ENCODE measurements at regions of chr7 and their contacts with region 1.

Region 1: DNA sequence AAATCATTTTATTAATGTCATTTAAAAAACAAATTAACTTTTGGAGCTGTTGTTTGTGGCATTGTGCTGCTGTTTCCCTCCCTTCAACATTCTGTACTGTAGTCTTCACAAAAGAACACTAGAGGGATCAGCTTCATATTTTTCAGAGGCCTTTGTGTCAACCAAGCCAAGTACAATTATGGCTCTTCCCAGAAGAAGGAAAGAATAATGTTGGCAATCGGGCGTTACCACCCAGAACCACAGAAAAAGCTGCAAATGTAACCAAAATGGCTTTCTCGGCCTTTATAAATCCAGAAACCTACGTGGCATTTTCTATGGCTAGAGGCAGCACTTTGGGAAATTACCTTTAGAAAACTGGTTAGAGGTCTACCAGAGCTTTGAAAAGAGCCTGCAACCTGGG is 98.8 kb upstream of the COL1A2 start:
- DNase-seq: peak in 1 of 2 donors; percentile 13
- ATAC-seq: peak; percentile 66 to 87 (median 70)
- H3K4me3 ChIP-seq: peak overlapping the region in 5 of 10 donors; percentile 7 to 28 (median 21)
- H3K27ac ChIP-seq: peak overlapping the region in 7 of 10 donors; percentile 65 to 86 (median 74)
- H3K4me1 ChIP-seq: peaks cover 0 to 30% (median 9%) of the 10 kb centered on the region in 9 donors
- H3K27me3 ChIP-seq: peaks cover 0 to 10% (median 0%) of the 10 kb centered on the region in 7 donors
- CTCF ChIP-seq: peak in 8 of 9 donors; percentile 30 to 76 (median 55)

Region 2: DNA sequence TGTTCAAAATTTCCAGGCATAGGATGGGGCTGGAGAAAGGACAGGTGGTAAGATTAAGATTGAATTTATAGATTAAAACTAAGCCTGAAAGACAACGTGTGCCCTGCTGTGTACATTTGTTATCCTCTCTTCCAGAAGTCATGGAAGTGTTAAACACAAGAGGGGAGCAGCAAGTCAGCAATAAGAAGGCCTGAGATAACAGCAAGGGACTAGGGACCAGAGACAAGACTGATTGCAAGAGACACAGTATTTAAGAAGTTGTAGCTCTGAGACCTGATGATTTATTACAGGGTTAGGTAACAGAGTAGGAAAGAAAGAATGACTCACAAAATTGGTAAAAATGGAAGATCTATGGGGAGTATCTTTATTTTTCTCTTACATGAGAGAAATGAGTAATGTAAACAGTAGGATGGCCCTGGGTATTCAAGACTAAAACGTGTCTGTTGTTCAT is 43.1 kb after region 1 on chr7:
- intact Hi-C with region 1: no loop called
- DNase-seq: no peak
- ATAC-seq: no peak
- H3K4me3 ChIP-seq: no peak overlapping the region
- H3K27ac ChIP-seq: no peak overlapping the region
- H3K4me1 ChIP-seq: no peaks in the 10 kb centered on the region
- H3K27me3 ChIP-seq: no peaks in the 10 kb centered on the region
- CTCF ChIP-seq: no peak

Region 3: GRCh38 chr7:94374231-94374630 is 78.4 kb after region 1 on chr7:
- intact Hi-C with region 1: loop called in 4 of 10 experiments (anchors 1 to 5 kb)
- DNase-seq: peak; percentile 60 to 73
- ATAC-seq: peak; percentile 72 to 90 (median 84)
- H3K4me3 ChIP-seq: peak overlapping the region in 5 of 10 donors; percentile 18 to 37 (median 30)
- H3K27ac ChIP-seq: peak overlapping the region; percentile 23 to 89 (median 84)
- H3K4me1 ChIP-seq: peaks cover 0 to 28% (median 0%) of the 10 kb centered on the region in 9 donors
- H3K27me3 ChIP-seq: no peaks in the 10 kb centered on the region
- CTCF ChIP-seq: peak in 3 of 9 donors; percentile 16 to 24 (median 20)

Region 4: DNA sequence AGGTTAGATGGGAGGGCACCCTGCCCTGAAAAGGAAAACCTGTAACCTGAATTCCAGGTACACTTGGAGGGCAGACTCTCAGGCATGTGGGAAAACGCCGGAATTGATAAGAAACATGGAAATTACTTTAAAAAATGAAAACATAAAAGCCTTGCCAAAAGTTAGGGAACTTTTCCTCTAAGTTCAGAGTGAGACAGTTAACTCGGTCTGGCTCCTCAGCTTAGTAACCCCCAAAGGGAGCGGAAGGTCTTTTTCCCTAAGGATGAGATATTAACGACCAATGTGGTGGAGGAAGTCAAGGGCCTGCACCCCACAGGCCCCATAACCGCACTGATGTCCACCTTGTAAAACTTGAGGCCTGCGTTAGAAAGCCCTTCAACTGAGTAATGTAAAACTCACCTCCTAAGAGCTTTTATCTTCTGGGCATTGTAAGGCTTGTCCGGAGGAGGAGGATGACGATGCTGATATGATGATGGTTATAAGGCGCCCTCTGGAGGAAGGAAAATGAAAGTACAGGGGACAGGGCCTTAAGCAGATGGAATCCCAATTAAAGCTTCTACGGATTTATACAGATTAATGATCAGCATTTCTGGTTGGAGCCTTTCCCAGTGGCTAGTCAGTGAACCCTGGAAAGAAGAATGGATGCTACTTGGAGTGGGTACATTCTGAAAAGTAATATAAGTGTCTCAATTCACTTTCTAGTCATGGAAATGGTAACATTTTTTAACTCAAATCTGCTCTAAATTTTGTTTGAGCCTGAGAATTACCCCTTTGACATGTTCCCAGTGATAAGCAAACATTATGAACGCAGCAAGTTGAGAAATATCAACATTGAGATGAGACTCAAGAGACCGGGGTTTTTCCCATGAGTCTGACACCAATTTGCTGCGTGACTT is 99.5 kb after region 1 on chr7:
- intact Hi-C with region 1: loop called (anchors 1 to 10 kb)
- DNase-seq: peak in 1 of 2 donors; percentile 68
- ATAC-seq: peak; percentile 58 to 87 (median 78)
- H3K4me3 ChIP-seq: peak overlapping the region; percentile 33 to 71 (median 58)
- H3K27ac ChIP-seq: peak overlapping the region; percentile 77 to 91 (median 86)
- H3K4me1 ChIP-seq: peaks cover 0 to 44% (median 15%) of the 10 kb centered on the region in 9 donors
- H3K27me3 ChIP-seq: peaks cover 0 to 24% (median 6%) of the 10 kb centered on the region in 7 donors
- CTCF ChIP-seq: peak; percentile 48 to 85 (median 75)

Region 5: DNA sequence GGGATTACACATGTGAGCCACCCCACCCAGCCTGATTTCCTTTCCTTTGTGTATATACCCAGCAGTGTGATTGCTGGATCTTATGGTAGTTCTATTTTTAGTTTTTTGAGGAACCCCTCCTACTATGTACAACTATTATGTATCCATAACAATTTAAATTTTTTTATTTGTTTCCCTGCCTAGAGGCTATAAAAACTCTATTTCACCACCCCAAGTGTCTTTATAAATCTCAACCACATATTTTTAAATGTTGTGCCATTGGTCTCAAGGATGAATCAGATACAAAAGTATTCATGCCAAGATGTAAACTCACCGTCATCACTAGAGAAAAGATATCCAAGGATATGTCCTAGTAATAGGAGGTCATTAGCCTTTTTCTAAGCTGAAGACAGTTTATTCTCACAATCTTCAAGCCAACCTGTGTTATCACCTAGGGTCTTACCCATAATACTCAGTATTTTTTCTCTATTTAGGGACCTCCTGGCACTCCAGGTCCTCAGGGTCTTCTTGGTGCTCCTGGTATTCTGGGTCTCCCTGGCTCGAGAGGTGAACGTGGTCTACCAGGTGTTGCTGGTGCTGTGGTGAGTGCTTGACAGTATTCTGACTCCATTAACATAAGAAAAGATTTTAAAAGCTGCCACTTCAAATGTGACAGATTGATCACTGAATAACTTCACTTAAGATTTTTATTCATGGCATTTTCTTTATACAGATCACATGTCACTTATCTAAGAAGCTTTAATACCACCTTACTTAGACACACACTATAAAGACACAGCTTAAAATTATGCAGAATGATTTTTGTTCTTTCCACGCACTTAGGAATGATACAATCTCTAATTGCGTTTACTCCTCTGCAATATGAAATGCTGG is 128.2 kb after region 1 on chr7:
- intact Hi-C with region 1: loop called in 1 of 10 experiments (anchors 10 kb)
- DNase-seq: no peak
- ATAC-seq: no peak
- H3K4me3 ChIP-seq: no peak overlapping the region
- H3K27ac ChIP-seq: no peak overlapping the region
- H3K4me1 ChIP-seq: no peaks in the 10 kb centered on the region
- H3K27me3 ChIP-seq: no peaks in the 10 kb centered on the region
- CTCF ChIP-seq: no peak

Region 6: DNA sequence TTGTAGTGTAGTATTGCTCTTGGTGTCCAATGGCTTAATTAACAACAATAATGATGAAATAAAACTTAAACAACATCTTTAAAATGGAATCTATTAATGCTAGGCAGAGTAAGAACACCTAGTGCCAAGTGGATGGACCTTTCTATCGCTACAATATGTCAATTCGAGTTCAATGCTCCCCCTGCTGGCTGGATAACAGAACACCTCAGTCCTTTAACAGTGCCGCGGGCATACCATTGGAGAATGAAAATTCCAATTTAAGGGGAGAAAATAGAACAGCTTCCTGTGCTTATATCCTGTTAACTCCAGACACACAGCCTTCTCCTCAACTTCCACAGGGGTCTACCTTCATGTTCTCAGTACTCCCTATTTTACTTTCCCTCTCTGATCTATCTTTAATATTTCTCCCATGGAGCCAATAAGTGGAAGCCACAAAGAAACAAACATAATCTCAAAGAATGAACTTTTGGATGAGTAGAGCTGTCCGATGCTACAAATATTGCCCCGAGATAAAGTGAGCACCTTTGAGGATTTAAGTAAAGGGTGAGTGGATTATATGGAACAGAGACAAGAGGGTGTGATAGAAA is 140.3 kb after region 1 on chr7:
- intact Hi-C with region 1: loop called in 3 of 10 experiments (anchors 2 to 5 kb)
- DNase-seq: peak in 1 of 2 donors; percentile 80
- ATAC-seq: peak; percentile 71 to 85 (median 81)
- H3K4me3 ChIP-seq: no peak overlapping the region
- H3K27ac ChIP-seq: no peak overlapping the region
- H3K4me1 ChIP-seq: peaks cover 0 to 15% (median 0%) of the 10 kb centered on the region in 9 donors
- H3K27me3 ChIP-seq: peaks cover 0 to 14% (median 8%) of the 10 kb centered on the region in 7 donors
- CTCF ChIP-seq: peak; percentile 59 to 88 (median 85)

Region 7: GRCh38 chr7:94561841-94562514 is 266.1 kb after region 1 on chr7:
- intact Hi-C with region 1: no loop called
- DNase-seq: no peak
- ATAC-seq: no peak
- H3K4me3 ChIP-seq: no peak overlapping the region
- H3K27ac ChIP-seq: no peak overlapping the region
- H3K4me1 ChIP-seq: no peaks in the 10 kb centered on the region
- H3K27me3 ChIP-seq: no peaks in the 10 kb centered on the region
- CTCF ChIP-seq: no peak

Region 8: GRCh38 chr7:95246831-95247370 is 951.1 kb after region 1 on chr7:
- intact Hi-C with region 1: loop called in 1 of 10 experiments (anchors 10 kb)
- DNase-seq: peak in 1 of 2 donors; percentile 50
- ATAC-seq: peak; percentile 57 to 84 (median 71)
- H3K4me3 ChIP-seq: peak overlapping the region in 2 of 10 donors; percentile 16 to 27
- H3K27ac ChIP-seq: no peak overlapping the region
- H3K4me1 ChIP-seq: no peaks in the 10 kb centered on the region
- H3K27me3 ChIP-seq: no peaks in the 10 kb centered on the region
- CTCF ChIP-seq: peak; percentile 40 to 75 (median 68)